ENCODE measurements at regions of chr5 and their contacts with region 1.

Region 1: GRCh38 chr5:179486596-179487051 is 63.7 kb upstream of the RUFY1 start:
- DNase-seq: peak in 6 of 10 donors; percentile 22 to 71 (median 54)
- H3K4me3 ChIP-seq: peak overlapping the region in 7 of 59 donors; percentile 3 to 27 (median 11)
- H3K27ac ChIP-seq: peak overlapping the region in 35 of 59 donors; percentile 26 to 86 (median 59)
- H3K27me3 ChIP-seq: peaks cover 0 to 26% (median 0%) of the 10 kb centered on the region in 45 donors
- CTCF ChIP-seq: no peak

Region 2: DNA sequence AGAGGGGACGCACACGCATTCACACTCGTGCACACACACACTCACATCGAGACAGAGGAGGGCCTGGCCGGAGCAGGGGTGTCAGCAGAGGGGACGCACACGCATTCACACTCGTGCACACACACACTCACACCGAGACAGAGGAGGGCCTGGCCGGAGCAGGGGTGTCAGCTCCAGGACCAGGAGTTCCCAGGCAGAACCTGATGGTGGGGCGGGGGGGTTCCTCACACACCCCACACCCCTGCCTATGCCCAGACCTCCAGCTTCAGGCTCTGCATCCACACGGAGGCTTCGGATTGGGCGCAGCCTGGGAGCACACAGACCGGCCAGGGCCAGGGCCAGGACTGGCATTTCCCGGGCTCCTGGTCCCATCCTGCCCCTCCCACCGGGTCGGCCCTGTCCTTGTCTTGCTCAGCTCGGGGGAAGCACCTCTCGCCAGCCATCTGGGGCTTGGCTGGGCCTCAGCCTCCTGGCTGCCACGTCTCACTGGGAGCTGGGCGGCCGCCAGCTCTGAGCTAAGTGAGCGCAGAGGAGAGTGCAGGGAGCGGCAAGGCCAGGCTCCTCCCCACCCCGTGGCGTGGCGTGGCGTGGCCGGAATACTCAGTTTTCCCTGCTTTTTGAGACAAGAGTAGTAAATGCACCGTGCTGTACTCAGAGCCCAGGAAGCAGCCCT is 172.6 kb before region 1 on chr5:
- intact Hi-C with region 1: no loop called
- DNase-seq: peak in 9 of 10 donors; percentile 12 to 95 (median 49)
- H3K4me3 ChIP-seq: peak overlapping the region in 18 of 59 donors; percentile 0 to 38 (median 24)
- H3K27ac ChIP-seq: peak overlapping the region in 1 of 59 donors; percentile 2
- H3K27me3 ChIP-seq: no peaks in the 10 kb centered on the region
- CTCF ChIP-seq: no peak

Region 3: DNA sequence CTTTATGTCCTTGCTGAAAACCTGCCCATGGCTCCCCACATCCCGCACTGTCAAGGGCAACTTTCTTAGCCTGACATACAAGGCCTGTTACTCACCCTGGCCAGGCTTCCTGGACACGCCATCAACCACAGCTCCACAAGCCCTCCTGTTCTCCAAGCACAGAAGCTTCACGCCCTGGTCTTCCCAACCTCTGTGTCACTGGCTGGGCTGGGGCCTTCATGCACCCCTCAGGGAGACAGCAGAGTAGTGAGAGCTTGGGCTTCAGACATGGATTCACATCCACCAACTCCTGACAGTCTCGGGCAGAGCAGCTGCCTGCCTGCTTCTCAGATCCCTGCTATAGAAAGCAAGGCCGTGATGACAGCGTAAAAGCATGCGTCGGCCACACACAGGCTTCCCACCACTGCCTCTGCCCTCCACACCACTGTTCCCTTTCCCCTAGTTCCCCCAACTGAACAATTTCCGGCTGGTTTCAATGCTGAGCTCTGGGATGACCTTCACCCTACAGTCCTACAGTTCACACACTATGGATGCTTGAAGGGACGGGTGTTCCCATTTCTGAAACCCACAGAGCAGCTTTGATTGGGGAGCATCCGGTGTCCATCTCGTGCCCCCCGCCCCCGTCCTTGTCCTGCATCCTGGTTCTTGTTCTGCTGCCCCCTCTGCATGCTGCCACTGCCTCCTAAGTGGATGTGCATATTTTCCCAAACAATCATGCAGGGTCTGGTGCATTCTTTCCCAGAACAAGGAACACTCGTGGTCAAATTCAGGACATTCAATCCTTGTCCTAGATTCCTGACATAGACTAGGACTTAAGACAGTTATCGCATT is 108.0 kb before region 1 on chr5:
- intact Hi-C with region 1: loop called in 1 of 2 experiments (anchors 10 kb)
- DNase-seq: peak in 1 of 10 donors; percentile 22
- H3K4me3 ChIP-seq: no peak overlapping the region
- H3K27ac ChIP-seq: no peak overlapping the region
- H3K27me3 ChIP-seq: no peaks in the 10 kb centered on the region
- CTCF ChIP-seq: no peak

Region 4: GRCh38 chr5:179450961-179451827 is 35.4 kb before region 1 on chr5:
- intact Hi-C with region 1: no loop called
- DNase-seq: peak in 5 of 10 donors; percentile 5 to 52 (median 50)
- H3K4me3 ChIP-seq: no peak overlapping the region
- H3K27ac ChIP-seq: peak overlapping the region in 1 of 59 donors; percentile 7
- H3K27me3 ChIP-seq: peaks cover 0 to 4% (median 0%) of the 10 kb centered on the region in 45 donors
- CTCF ChIP-seq: no peak

Region 5: DNA sequence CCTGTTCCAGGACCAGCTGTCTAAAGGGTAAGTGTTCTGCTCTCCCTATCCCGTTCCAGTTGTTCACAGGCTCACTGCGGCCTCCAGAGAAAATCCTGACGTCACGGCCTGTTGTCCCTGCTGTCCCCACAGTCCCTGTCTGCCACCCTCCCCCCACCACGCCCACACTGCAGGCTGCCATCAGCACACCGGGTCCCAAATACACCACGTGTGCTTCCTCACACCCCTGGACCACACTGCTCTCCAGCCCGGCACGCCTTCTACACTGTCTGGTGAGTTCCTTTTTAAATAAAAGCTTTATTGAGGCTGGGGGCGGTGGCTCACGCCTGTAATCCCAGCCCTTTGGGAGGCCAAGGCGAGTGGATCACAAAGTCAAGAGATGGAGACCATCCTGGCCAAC is 24.6 kb before region 1 on chr5:
- intact Hi-C with region 1: no loop called
- DNase-seq: no peak
- H3K4me3 ChIP-seq: no peak overlapping the region
- H3K27ac ChIP-seq: no peak overlapping the region
- H3K27me3 ChIP-seq: peaks cover 0 to 5% (median 0%) of the 10 kb centered on the region in 45 donors
- CTCF ChIP-seq: no peak

Region 6: GRCh38 chr5:179763215-179763945 is 276.8 kb after region 1 on chr5:
- intact Hi-C with region 1: no loop called
- DNase-seq: peak in 8 of 10 donors; percentile 53 to 78 (median 66)
- H3K4me3 ChIP-seq: peak overlapping the region in 2 of 59 donors; percentile 14 to 34
- H3K27ac ChIP-seq: peak overlapping the region in 31 of 59 donors; percentile 2 to 69 (median 44)
- H3K27me3 ChIP-seq: no peaks in the 10 kb centered on the region
- CTCF ChIP-seq: peak; percentile 76 to 95 (median 87)

Measured in dorsolateral prefrontal cortex (tissue), 120 donors.